ENCODE measurements at regions of chr2 and their contacts with region 1.

Region 1: DNA sequence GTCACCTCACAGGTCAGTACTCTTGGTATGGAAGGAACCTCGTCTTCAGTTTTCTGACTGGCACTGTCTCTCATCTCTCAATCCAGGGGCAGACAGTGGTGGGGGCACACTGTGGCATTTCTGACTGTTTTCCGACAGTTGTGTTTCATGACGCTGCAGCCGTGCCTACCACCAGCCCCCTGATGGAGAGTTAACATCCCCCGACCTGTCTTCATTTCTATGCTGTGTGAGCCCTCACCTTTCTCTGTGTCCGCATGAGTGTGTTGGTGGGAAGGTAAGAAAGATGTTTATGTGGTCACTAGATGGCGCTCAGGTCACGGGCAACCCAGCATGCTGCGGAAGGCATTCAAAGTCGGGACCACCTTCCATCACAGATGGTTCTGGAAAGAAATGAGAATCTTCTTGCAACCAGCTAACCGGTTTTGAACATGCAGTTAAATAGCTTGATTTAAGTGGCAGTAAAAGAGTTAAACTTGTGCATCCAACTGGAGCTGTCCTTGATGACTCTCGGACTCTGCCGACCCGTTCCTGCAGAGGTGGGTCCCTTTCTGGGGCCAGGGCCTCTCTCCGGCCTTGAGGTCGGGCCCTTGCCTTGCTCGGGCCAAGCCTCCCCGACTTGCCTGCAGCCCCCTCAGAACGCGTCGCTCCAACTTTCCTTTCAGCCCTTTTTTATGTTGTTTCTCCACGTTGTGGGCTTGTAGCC is 92.4 kb downstream of the DYSF start:
- DNase-seq: peak; percentile 52 to 72 (median 66)
- H3K4me3 ChIP-seq: peak overlapping the region in 31 of 59 donors; percentile 1 to 53 (median 25)
- H3K27ac ChIP-seq: peak overlapping the region in 5 of 59 donors; percentile 20 to 81 (median 67)
- H3K27me3 ChIP-seq: no peaks in the 10 kb centered on the region
- CTCF ChIP-seq: peak; percentile 50 to 91 (median 80)

Region 2: DNA sequence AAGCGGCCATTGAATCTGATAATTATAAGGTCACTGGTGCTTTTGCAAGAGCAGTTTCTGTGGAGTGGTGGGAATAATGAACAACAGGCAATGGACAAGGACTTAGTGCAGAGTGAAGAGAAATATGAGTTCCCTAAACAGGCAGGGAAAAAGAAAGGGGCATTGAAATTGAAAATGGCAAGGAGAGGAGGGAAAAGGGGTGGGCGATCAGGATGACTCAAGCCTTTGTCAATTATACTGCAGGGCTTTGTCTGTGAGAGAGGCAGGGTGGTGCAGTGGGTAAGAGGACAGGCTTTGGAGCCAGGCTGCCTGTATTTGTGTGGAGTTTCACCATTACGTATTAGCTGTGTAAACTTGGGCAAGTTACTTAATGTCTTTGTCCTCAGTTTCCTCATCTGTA is 289.3 kb before region 1 on chr2:
- intact Hi-C with region 1: no loop called
- DNase-seq: peak; percentile 4 to 87 (median 67)
- H3K4me3 ChIP-seq: peak overlapping the region in 11 of 59 donors; percentile 5 to 28 (median 14)
- H3K27ac ChIP-seq: peak overlapping the region in 58 of 59 donors; percentile 13 to 96 (median 87)
- H3K27me3 ChIP-seq: no peaks in the 10 kb centered on the region
- CTCF ChIP-seq: peak in 11 of 56 donors; percentile 6 to 41 (median 16)

Region 3: DNA sequence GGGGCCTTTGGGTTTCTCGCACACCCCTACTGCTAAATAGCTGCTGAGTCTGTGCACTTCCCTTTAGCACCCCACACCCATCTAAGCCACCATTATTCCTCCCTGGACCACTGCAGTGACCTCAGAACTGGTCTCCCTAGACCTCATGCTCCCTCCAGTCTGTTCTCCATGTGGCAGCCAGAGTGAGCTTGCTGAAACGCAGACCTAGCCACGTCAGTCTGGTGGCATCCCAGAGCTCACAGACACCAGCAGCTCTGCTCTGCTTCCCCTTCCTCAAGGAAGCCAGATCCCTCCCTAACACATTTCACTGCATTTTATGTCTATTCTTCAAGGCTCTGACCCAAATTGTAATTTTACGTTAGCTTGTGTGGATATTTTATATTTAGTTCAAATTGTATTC is 52.0 kb after region 1 on chr2:
- intact Hi-C with region 1: loop called (anchors 2 kb)
- DNase-seq: no peak
- H3K4me3 ChIP-seq: no peak overlapping the region
- H3K27ac ChIP-seq: peak overlapping the region in 41 of 59 donors; percentile 18 to 99 (median 96)
- H3K27me3 ChIP-seq: no peaks in the 10 kb centered on the region
- CTCF ChIP-seq: no peak

Region 4: GRCh38 chr2:71798266-71799012 is 252.7 kb after region 1 on chr2:
- intact Hi-C with region 1: loop called (anchors 1 to 5 kb)
- DNase-seq: no peak
- H3K4me3 ChIP-seq: no peak overlapping the region
- H3K27ac ChIP-seq: no peak overlapping the region
- H3K27me3 ChIP-seq: peaks cover 0 to 5% (median 0%) of the 10 kb centered on the region in 45 donors
- CTCF ChIP-seq: peak in 55 of 56 donors; percentile 23 to 78 (median 66)

Region 5: GRCh38 chr2:71995067-71995665 is 449.4 kb after region 1 on chr2:
- intact Hi-C with region 1: loop called in 1 of 2 experiments (anchors 5 kb)
- DNase-seq: no peak
- H3K4me3 ChIP-seq: no peak overlapping the region
- H3K27ac ChIP-seq: no peak overlapping the region
- H3K27me3 ChIP-seq: peaks cover 0 to 9% (median 0%) of the 10 kb centered on the region in 45 donors
- CTCF ChIP-seq: peak in 48 of 56 donors; percentile 11 to 61 (median 37)

Region 6: DNA sequence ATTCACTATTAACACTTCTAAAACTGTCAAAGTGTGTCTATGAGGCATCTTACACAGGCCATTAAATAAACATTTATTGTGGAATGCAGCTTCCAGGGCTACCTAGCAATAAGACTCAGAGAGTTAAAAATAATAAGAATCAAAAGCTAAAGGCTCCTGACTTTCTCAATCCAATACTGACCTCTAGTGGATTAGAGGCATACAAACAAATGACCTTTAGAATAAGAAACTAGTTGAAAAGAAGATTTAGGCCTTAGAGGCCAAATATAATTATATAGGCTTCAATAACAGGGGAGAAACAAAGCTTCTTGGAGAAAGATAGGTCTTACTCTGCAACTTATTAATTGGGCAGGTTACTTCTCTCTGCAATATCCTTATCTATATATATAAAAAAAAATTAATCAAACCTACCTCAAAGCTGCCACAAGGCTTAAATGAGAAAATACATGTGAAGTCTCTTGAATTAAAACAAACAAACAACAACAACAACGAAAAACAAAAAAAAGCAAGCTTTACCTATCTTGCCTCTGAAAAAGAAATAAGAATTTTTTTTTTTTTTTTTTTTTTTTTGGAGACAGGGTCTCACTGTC is 1034.0 kb after region 1 on chr2:
- intact Hi-C with region 1: loop called in 1 of 2 experiments (anchors 2 kb)
- DNase-seq: no peak
- H3K4me3 ChIP-seq: no peak overlapping the region
- H3K27ac ChIP-seq: no peak overlapping the region
- H3K27me3 ChIP-seq: no peaks in the 10 kb centered on the region
- CTCF ChIP-seq: peak; percentile 56 to 90 (median 75)

Region 7: DNA sequence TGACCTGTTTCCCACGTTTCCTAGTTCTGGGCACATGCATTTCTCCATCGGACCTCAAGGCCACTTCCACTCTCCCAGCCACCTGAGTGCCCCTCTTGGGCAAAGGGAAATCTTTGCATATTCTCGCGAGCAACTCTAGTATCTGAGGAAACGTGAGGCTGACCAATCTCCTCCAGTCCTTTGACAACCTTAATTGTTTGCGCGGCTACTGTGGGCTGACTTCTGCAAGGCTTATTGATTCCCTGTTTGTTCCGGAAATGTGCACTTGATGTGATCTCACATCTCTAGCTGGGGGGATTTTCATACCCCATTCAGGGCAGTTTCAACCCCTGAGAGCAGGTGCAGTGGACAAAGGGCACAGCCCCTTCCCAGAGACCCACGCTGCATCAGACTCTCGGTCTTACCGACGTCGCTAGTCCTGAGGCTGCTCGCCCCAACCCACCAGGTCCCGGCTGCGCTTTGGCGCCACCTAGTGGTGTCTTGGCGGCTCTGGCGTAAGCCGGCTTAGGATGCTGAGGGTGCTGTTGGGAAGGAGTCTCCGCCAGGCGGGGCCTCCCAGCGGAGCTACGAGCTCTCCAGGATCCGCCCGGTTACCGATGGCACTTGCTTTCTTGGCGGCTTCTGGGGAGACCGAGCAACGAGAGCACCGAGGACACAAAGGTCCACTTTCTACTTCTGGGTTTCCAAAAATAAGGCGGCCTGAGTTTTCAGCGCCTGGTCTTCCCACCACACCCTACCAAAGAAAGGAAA is 1316.7 kb after region 1 on chr2:
- intact Hi-C with region 1: loop called in 1 of 2 experiments (anchors 10 kb)
- DNase-seq: peak; percentile 80 to 94 (median 84)
- H3K4me3 ChIP-seq: peak overlapping the region; percentile 21 to 69 (median 50)
- H3K27ac ChIP-seq: peak overlapping the region in 1 of 59 donors; percentile 38
- H3K27me3 ChIP-seq: no peaks in the 10 kb centered on the region
- CTCF ChIP-seq: peak; percentile 65 to 99 (median 97)

Measured in dorsolateral prefrontal cortex (tissue), 120 donors.